ENCODE measurements at regions of chr2 and their contacts with region 1.

Region 1: GRCh38 chr2:169584005-169584877 is at the start of gene PPIG:
- DNase-seq: peak; percentile 83 to 94 (median 90)
- H3K4me3 ChIP-seq: peak within 1 kb of the TSS; percentile 68 to 99 (median 91)
- H3K27ac ChIP-seq: peak within 1 kb of the TSS; percentile 66 to 99 (median 96)
- H3K27me3 ChIP-seq: no peaks in the 10 kb centered on the region
- CTCF ChIP-seq: peak in 14 of 56 donors; percentile 8 to 43 (median 18)
- total RNA-seq, gene PPIG: 49.0 to 86.8 (median 70.5) TPM

Region 2: DNA sequence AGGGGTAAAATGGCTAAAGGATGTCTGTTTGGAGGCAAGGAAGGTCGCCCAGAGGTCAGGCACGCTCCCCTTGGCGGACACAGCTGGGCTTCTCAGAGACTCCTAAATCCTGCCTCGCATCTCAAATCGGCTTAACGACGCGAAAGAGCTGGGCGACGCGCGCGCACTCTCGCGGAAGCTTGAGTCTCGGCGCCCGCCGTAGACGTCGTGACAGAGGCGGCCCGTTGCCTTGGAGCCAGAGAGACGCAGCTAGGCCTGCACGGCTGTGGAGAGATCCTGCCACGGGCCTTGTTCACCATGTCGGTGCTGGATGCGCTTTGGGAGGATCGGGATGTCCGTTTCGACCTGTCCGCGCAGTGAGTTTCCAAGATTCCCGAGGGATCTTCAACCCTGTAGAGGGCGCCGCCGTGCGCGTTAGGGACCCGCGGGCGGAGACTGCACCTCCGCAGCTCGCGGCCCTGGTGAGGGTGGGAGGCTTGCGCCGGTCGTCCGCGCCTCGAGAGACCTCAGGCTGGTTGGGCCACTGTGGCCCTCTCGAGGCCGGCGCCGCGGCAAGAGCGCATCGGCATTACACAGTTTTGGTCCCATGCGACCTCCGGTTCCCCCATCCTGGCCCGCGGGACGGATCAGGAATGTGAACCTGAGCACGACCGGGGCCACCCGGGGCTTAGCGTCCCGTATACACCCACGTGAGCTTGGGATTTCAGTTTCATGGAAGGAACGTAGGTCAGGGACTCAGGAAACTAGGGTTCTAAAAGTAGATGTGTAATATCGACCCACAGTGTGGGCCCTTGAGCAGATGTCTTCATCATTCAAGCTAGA is 104.8 kb before region 1 on chr2 and contains the start of gene BBS5:
- intact Hi-C with region 1: loop called in 1 of 2 experiments (anchors 10 kb)
- DNase-seq: peak; percentile 78 to 92 (median 89)
- H3K4me3 ChIP-seq: peak within 1 kb of the TSS; percentile 60 to 97 (median 86)
- H3K27ac ChIP-seq: peak within 1 kb of the TSS in 58 of 59 donors; percentile 15 to 94 (median 82)
- H3K27me3 ChIP-seq: no peaks in the 10 kb centered on the region
- CTCF ChIP-seq: peak; percentile 21 to 82 (median 58)
- total RNA-seq, gene BBS5: 13.8 to 28.0 (median 21.3) TPM

Region 3: GRCh38 chr2:169495310-169495928 is 88.8 kb before region 1 on chr2:
- intact Hi-C with region 1: no loop called
- DNase-seq: no peak
- H3K4me3 ChIP-seq: no peak overlapping the region
- H3K27ac ChIP-seq: no peak overlapping the region
- H3K27me3 ChIP-seq: no peaks in the 10 kb centered on the region
- CTCF ChIP-seq: no peak

Region 4: DNA sequence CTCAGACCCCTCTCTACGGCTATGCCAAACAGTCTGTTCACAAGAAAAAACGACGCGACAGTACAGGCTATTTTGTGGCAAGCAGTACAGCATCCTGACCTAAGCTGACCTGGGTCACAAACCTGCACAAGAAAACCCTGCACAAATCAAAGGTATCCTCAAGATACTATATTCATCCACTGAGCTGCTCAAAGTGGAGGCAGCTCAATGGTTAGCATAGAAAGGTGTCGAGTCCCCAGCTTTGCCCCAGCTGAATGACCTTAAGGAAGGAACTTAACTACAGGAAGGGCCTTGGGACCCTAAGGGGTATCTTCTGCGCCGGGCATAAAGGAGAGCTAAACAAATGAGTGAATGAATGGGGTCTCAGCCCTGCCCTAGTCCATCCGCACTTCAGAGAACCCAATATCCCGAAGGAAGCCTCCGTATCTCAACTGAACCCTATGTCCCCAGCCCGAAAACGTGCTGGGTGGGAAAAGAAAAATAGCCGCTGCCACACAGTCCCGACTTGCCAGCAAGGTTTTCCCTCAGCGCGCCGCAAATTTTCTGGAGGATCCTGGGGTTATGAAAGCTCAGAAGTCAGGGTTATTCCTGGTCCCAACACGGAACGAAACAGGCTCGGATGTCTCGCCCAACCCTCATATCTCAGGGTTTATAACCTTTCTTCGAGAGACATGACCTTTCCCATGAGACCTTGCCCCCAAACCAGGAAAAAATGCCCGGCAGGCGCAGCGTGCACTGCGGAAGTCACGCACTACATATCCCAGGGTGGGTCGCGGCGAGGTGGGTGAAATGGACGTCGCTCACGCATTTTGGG is 10.9 kb before region 1 on chr2 and contains the start of gene FASTKD1:
- intact Hi-C with region 1: loop called in 1 of 2 experiments (anchors 1 kb)
- DNase-seq: peak; percentile 82 to 95 (median 93)
- H3K4me3 ChIP-seq: peak within 1 kb of the TSS; percentile 50 to 95 (median 79)
- H3K27ac ChIP-seq: peak within 1 kb of the TSS in 49 of 59 donors; percentile 1 to 85 (median 60)
- H3K27me3 ChIP-seq: no peaks in the 10 kb centered on the region
- CTCF ChIP-seq: peak in 18 of 56 donors; percentile 11 to 50 (median 29)
- total RNA-seq, gene FASTKD1: 36.9 to 85.3 (median 55.5) TPM

Region 5: DNA sequence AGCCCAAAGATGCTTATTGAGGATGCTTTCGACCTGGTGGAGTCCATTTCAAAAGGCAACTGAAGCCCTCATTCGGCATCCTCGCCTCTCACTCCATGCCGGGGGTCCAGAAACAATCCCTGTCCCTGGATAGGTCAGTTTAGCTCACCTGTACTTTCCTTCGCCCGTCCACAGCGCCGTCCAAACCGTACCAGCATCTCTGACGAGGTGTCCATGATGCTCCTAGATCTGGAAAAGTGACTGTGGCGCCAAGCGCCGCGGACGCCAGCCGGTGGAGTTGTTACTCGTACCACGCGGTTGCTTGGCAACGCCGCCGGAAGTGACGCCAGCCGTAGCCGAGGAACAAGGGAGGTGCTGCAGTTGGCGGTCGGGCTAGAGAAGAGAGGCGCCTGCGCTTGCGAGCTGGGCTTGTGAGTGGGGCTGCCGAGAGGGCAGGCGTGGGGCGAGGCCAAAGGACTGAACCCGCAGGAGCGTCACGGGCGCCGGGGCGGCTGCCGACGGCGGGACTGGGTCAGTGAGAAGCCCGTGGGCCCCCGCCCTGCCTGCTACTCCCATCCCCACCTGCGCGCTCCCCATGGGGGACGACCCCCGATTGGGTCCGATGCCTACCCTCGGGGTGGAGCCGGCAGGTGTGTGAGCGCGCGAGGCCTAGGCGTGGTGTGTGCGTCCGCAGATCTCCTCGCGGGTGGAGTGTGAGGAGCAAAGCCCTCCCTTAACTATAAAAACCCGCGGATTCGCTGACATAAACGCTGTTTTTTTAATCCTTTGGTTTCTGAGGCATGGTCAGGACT is 110.1 kb after region 1 on chr2 and contains the starts of genes CFAP210 and PHOSPHO2:
- intact Hi-C with region 1: loop called (anchors 5 to 10 kb)
- DNase-seq: peak; percentile 99 to 100 (median 99)
- H3K4me3 ChIP-seq: peak within 1 kb of the TSS; percentile 61 to 98 (median 91)
- H3K27ac ChIP-seq: peak within 1 kb of the TSS in 51 of 59 donors; percentile 14 to 92 (median 72)
- H3K27me3 ChIP-seq: no peaks in the 10 kb centered on the region
- CTCF ChIP-seq: peak in 34 of 56 donors; percentile 6 to 53 (median 24)
- total RNA-seq, gene CFAP210: 0.36 to 9.7 (median 2.8) TPM
- total RNA-seq, gene PHOSPHO2: 3.3 to 13.0 (median 7.3) TPM

Region 6: DNA sequence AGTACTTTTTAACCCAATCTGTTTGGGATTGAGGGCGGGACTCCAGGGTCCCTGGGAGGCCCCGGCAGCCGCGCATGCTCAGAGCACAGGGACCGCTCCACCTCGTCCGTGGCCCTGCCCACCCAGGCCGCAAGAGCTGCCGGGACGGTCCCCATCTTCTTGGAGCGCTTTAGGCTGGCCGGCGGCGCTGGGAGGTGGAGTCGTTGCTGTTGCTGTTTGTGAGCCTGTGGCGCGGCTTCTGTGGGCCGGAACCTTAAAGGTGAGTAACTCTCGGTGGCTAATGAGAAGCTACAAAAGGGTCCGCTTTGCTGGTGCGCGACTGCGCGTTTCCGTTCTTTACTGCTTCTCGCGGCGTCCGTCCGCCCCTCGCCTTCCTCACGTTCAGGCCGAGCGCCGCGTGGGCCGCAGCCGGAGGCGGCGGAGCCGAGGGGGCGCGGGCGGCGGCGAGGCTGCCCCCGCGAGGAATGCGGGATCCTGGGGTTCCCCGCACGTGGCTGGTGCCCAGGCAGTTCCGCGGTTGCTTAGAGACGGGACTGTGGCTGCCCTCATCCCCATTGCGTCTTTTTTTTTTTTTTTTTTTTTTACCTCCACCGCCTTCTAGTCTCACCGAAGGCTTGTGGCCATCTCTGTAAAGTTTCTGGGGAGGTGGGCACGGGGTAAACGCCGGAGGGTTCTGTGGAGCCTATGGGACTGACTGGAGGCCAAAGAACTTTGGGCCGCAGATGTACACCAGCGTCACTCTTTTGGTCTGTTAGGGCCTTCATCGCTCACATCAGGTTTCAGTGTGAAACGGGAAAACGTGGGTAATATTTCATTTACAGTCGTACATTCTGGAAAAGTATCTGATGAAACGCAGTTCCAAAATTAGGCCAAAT is 214.7 kb after region 1 on chr2 and contains the start of gene SSB:
- intact Hi-C with region 1: loop called (anchors 5 to 10 kb)
- DNase-seq: peak; percentile 83 to 95 (median 92)
- H3K4me3 ChIP-seq: peak within 1 kb of the TSS; percentile 54 to 95 (median 82)
- H3K27ac ChIP-seq: peak within 1 kb of the TSS in 58 of 59 donors; percentile 27 to 92 (median 77)
- H3K27me3 ChIP-seq: no peaks in the 10 kb centered on the region
- CTCF ChIP-seq: peak in 34 of 56 donors; percentile 6 to 55 (median 31)
- total RNA-seq, gene SSB: 57.0 to 111 (median 83.5) TPM

Measured in dorsolateral prefrontal cortex (tissue), 120 donors.